GM12878 (cell line): ENCODE measurements at regions of chr14 and their contacts with region 1.

Region 1: DNA sequence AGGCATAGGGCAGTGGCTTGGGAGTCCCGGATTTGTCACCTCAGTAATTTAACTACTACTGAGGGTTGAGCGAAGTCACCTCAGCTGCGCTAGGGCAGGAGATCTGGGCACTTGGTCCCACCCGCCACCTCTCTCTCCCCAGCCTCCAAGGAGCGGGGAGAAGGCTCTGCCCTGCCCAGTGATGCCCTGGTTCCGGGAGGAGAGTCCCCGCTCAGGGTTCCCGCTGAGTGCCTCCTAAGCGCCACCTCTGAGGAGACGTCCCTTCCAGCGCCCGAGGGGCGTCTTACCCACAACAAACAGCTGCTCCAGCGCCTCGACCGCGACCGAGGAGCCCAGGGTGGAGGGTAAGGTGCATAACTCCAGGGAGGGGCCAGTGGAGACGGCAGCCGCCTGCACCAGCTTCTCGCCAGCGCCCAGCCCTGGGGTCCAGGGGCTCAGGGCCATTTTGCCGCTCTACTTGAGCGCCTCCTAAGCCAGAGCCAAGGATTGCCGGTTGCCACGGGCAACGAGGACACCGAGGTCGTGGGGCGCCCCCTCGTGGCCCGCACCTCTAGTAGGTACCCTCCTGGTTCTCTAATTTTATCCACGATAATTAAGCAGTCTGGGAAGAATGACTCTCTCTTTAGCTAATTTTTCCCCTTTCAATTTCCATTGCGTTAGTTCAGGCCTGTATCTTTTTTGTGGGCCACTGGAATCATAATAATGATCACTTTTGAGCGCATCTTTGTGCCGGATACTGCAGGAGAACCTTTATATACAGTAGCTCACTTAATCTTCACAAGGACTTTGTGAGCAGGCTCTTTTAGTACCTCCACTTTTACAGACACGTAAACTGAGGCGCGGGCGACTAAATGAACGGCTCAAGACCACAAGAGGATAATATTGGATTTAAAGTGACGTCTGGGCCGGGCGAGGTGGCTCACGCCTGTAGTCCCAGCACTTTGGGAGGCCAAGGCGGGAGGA is at the start of gene CCDC175:
- DNase-seq: peak; percentile 7
- ATAC-seq: peak; percentile 99
- H3K4me3 ChIP-seq: peak within 1 kb of the TSS; percentile 52; the same call in 1 of the 2 replicates
- H3K27ac ChIP-seq: no peak within 1 kb of the TSS
- H3K4me1 ChIP-seq: no peaks in the 10 kb centered on the region; the same call in 1 of the 2 replicates
- H3K27me3 ChIP-seq: peaks cover 0 to 5% of the 10 kb centered on the region in 2 experiments; a peak in 3 of 4 replicates
- CTCF ChIP-seq: peak; percentile 80 to 88 (median 85)
- EP300 ChIP-seq: no peak
- POLR2A ChIP-seq: no peak
- RAD21 ChIP-seq: peak; percentile 75
- polyA plus RNA-seq, gene CCDC175: not detected

Region 2: DNA sequence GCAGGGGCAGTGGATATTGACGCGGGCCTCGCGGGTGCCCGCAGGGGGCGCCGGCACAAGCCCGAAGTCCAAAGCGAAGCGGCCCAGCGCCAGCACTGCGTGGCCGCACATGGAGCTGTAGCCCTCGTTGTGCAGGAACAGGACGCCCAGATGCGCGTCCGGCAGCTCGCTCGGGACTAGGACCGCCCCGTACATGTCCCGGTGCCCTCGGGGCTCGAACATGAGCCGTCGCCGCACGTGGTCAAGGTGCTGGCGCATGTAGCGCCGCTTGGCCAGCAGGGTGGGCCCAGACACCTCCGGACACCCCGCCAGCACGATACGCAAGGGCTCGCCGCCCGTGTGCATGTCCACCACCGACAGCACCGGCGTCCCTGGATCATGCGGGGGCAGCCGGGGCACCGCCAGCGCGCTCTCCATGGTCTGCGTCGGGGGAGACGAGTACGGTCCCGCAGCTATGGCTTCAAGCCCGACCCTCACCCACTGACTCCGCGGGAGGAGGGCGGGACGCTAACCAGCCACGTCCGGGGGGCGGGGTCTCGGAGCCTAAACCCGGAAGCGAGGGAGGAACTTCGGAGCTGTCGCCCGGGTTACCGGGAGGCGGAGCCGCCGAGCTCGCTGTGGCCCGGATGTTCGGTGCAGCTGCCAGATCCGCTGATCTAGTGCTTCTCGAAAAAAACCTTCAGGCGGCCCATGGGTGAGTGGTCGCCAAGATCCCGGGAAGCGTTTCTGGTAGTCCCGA is 92.5 kb before region 1 on chr14 and contains the starts of genes JKAMP and L3HYPDH:
- CTCF ChIA-PET with region 1: interaction called, 14 read pairs
- POLR2A ChIA-PET with region 1: no interaction called
- RAD21 ChIA-PET with region 1: interaction called, 5 read pairs
- SMC1A ChIA-PET with region 1: interaction called, 3 read pairs
- in situ Hi-C with region 1: no loop called
- intact Hi-C with region 1: no loop called
- DNase-seq: peak; percentile 78
- ATAC-seq: peak; percentile 88
- H3K4me3 ChIP-seq: peak within 1 kb of the TSS; percentile 83
- H3K27ac ChIP-seq: peak within 1 kb of the TSS; percentile 85
- H3K4me1 ChIP-seq: peaks cover 10% of the 10 kb centered on the region; the same call in 1 of the 2 replicates
- H3K27me3 ChIP-seq: no peaks in the 10 kb centered on the region
- CTCF ChIP-seq: peak; percentile 44 to 58 (median 57); a peak in 4 of 6 replicates
- EP300 ChIP-seq: 0 out of 4 replicates have a peak, but pooled peaks of 1 of the 2 experiments have one; percentile 7
- POLR2A ChIP-seq: peak; percentile 95
- RAD21 ChIP-seq: no peak
- polyA plus RNA-seq, gene JKAMP: 66.3 to 129 TPM
- polyA plus RNA-seq, gene L3HYPDH: 13.5 to 19.5 TPM

Region 3: DNA sequence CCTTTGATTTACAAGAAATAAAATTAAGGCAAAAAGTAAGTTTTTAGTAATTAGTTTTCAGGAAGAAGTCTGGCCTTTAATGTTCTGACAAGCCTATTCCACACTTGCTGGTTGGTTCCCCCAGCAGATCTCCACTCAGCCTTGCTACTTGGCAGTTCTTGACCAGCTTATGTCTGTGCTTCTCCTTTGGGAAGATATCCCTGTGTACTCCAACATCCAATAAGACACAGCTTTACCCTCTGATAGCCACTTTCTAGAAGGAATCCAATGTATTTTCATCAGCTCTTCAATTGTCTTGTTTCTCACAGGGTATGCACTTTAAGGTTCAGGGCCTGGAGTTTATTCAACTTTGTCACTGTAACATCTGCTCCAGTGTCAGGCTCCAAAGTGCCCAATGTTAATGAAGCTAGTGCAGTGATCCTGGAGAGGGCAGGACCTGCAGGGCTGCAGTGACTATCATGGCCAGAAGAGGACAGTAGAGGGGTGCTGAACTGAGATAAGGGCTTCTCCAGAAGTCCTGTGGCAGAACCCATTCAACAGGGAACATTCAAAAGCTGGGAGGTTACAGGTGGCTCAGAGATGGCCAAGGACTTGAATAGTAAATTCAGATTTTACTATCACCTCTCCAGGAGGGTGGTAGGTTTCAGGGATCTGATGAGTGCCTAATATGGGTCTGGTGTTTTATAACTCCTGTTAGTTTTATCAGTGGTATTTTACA is 69.4 kb before region 1 on chr14:
- CTCF ChIA-PET with region 1: interaction called, 147 read pairs
- POLR2A ChIA-PET with region 1: no interaction called
- RAD21 ChIA-PET with region 1: interaction called, 13 read pairs
- SMC1A ChIA-PET with region 1: interaction called, 29 read pairs
- in situ Hi-C with region 1: no loop called
- intact Hi-C with region 1: loop called (anchors 2 kb)
- DNase-seq: no peak
- ATAC-seq: peak; percentile 94
- H3K4me3 ChIP-seq: no peak overlapping the region
- H3K27ac ChIP-seq: no peak overlapping the region
- H3K4me1 ChIP-seq: no peaks in the 10 kb centered on the region
- H3K27me3 ChIP-seq: no peaks in the 10 kb centered on the region
- CTCF ChIP-seq: peak; percentile 86 to 95 (median 90)
- EP300 ChIP-seq: no peak
- POLR2A ChIP-seq: no peak
- RAD21 ChIP-seq: peak; percentile 68

Region 4: GRCh38 chr14:59564366-59564765 is 12.2 kb before region 1 on chr14:
- CTCF ChIA-PET with region 1: interaction called, 20 read pairs
- POLR2A ChIA-PET with region 1: no interaction called
- RAD21 ChIA-PET with region 1: interaction called, 4 read pairs
- SMC1A ChIA-PET with region 1: no interaction called
- in situ Hi-C with region 1: no loop called
- intact Hi-C with region 1: no loop called
- DNase-seq: no peak
- ATAC-seq: no peak
- H3K4me3 ChIP-seq: no peak overlapping the region
- H3K27ac ChIP-seq: no peak overlapping the region
- H3K4me1 ChIP-seq: no peaks in the 10 kb centered on the region
- H3K27me3 ChIP-seq: no peaks in the 10 kb centered on the region; a peak in 1 of 4 replicates
- CTCF ChIP-seq: no peak
- EP300 ChIP-seq: no peak
- POLR2A ChIP-seq: no peak
- RAD21 ChIP-seq: no peak

Region 5: GRCh38 chr14:59600211-59600945 is 23.8 kb after region 1 on chr14:
- CTCF ChIA-PET with region 1: interaction called, 10 read pairs
- POLR2A ChIA-PET with region 1: no interaction called
- RAD21 ChIA-PET with region 1: no interaction called
- SMC1A ChIA-PET with region 1: no interaction called
- in situ Hi-C with region 1: no loop called
- intact Hi-C with region 1: no loop called
- DNase-seq: no peak
- ATAC-seq: no peak
- H3K4me3 ChIP-seq: no peak overlapping the region
- H3K27ac ChIP-seq: no peak overlapping the region
- H3K4me1 ChIP-seq: no peaks in the 10 kb centered on the region
- H3K27me3 ChIP-seq: no peaks in the 10 kb centered on the region; a peak in 2 of 4 replicates
- CTCF ChIP-seq: no peak
- EP300 ChIP-seq: no peak
- POLR2A ChIP-seq: no peak
- RAD21 ChIP-seq: no peak